ENCODE measurements at regions of chr5 and their contacts with region 1.

Region 1: DNA sequence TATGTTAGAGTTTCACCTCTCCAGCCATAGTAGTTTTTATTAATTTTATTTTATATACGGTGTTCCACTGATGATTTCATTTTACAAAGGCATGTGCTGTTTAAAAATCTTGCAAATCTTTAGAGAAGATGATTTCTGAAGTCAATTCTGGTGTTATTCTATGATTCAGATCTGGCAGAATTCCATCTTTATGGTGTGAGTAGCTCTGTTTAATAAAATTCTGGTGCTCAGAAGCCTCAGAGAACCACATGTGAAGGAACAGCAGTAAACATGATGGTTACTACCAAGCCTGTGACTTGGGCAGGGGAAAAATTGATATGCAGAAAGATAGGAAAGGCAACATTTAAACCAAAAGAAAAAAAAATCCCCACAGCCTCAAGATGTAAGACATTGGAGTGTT is 299.7 kb downstream of the NPR3 start:
- DNase-seq: no peak
- ATAC-seq: no peak
- H3K4me3 ChIP-seq: no peak overlapping the region
- H3K27ac ChIP-seq: no peak overlapping the region
- H3K4me1 ChIP-seq: no peaks in the 10 kb centered on the region
- H3K27me3 ChIP-seq: no peaks in the 10 kb centered on the region
- CTCF ChIP-seq: no peak

Region 2: DNA sequence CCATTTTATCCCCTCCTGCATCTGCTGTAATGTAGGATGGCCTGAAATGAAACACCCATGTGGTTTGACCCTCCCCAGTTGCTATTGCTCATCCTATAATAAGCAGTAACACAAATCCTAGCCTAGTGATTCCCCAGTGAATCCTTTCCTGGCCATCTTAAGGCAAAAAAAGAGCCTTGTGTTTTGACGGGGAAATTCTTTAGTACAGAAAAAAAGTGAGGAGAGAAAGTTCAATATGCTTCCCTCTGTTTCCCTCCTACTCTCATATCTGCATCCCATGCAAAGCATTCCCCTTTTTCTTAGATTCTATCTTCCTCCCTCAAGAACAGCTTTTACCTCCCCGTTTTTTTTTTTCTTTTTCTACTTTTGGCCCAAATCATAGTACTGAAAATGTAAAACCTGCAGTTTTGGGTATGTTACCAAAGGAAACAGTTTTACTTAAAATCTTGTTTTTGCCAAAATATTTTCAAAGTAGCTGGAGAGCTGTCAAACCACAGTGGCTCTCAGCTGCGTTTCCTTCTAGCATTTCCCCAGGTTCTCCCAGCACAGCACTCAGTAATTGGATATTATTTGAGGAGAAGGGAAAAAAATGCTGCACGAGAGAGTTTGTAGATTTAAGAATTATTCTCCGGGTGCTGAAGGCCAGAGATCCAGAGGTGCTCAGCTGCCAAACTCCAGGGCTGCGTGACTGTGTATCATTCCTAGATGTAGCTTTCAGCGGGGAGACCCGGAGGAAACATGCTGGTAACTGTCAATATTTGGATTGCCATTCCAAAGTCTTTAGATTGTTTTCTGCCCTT is 21.6 kb after region 1 on chr5:
- intact Hi-C with region 1: loop called in 1 of 10 experiments (anchors 2 kb)
- DNase-seq: no peak
- ATAC-seq: peak in 6 of 8 donors; percentile 51 to 79 (median 66)
- H3K4me3 ChIP-seq: no peak overlapping the region
- H3K27ac ChIP-seq: peak overlapping the region in 3 of 10 donors; percentile 8 to 46 (median 23)
- H3K4me1 ChIP-seq: peaks cover 0 to 14% (median 0%) of the 10 kb centered on the region in 9 donors
- H3K27me3 ChIP-seq: no peaks in the 10 kb centered on the region
- CTCF ChIP-seq: no peak

Measured in heart right ventricle (tissue), 16 donors.